Common myeloid progenitor, CD34-positive (primary cell): ENCODE measurements at regions of chr7 and their contacts with region 1.

Region 1: GRCh38 chr7:51141451-51142003 is 175.1 kb downstream of the COBL start:
- DNase-seq: peak; percentile 57 to 78 (median 74)
- H3K4me3 ChIP-seq: no peak overlapping the region
- H3K27ac ChIP-seq: no peak overlapping the region
- H3K4me1 ChIP-seq: peaks cover 15 to 44% (median 25%) of the 10 kb centered on the region in 4 experiments
- H3K27me3 ChIP-seq: peaks cover 0 to 2% (median 0%) of the 10 kb centered on the region in 5 experiments

Region 2: GRCh38 chr7:50092579-50093491 is 1048.7 kb before region 1 on chr7 and contains the start of gene ZPBP:
- CTCF ChIA-PET with region 1: interaction called, 10 read pairs
- POLR2A ChIA-PET with region 1: no interaction called
- DNase-seq: peak; percentile 68 to 84 (median 78)
- H3K4me3 ChIP-seq: peak within 1 kb of the TSS; percentile 11 to 86 (median 76)
- H3K27ac ChIP-seq: peak within 1 kb of the TSS in 1 of 2 experiments; percentile 22
- H3K4me1 ChIP-seq: peaks cover 3 to 9% (median 6%) of the 10 kb centered on the region in 4 experiments
- H3K27me3 ChIP-seq: no peaks in the 10 kb centered on the region

Region 3: DNA sequence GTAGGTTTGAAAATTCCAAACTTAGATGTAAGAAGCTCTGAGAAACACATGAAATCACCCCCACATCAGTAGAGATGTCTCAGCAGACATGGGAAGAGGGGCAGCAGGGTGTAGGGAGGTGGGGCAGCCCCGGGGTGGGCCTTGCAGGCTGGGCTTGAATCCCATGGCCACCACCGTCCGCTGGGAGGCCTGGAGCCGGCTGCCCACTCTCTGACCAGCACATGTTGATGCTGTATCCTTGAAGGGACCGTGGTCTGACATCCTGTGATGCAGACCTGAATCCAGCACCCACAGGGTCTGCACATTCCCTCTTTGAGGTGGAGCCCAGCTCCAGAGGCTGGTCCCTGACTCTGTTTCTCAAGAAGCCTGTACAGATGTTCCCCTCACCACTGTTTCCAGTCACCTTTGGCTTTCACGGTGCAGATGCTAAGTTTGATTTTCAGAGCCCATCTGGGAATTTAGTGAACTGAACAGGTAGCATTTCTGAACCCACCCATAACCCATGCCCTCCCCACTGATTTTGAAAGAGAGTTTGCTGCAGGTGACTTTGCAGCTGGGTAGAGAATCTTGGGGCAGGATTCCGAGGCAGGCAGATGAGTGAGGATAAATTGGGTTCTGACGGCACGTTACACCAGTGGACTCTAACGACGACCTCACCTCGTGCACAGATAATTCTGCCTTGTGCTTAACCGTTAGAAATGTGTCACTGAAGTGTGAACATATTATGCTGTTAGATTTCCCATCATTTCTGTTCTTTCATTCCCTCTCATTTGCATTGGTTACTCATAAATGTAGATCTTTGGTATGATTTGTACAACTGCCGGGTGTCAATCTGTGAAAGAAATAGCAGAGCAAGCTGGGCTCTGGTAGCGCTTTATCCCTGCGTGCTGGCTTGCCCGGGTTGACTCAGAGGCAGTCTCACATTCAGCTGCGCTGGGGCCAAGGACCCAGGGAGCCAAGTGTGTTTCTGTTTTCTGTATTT is 791.3 kb before region 1 on chr7:
- CTCF ChIA-PET with region 1: no interaction called
- POLR2A ChIA-PET with region 1: no interaction called
- DNase-seq: peak in 2 of 3 donors; percentile 70 to 75
- H3K4me3 ChIP-seq: no peak overlapping the region
- H3K27ac ChIP-seq: peak overlapping the region; percentile 16 to 75
- H3K4me1 ChIP-seq: peaks cover 15 to 74% (median 62%) of the 10 kb centered on the region in 4 experiments
- H3K27me3 ChIP-seq: no peaks in the 10 kb centered on the region

Region 4: GRCh38 chr7:50664461-50664922 is 477.0 kb before region 1 on chr7:
- CTCF ChIA-PET with region 1: interaction called, 17 read pairs
- POLR2A ChIA-PET with region 1: no interaction called
- DNase-seq: peak; percentile 53 to 95 (median 90)
- H3K4me3 ChIP-seq: peak overlapping the region in 2 of 7 experiments; percentile 26 to 32
- H3K27ac ChIP-seq: peak overlapping the region in 1 of 2 experiments; percentile 68
- H3K4me1 ChIP-seq: peaks cover 12 to 70% (median 66%) of the 10 kb centered on the region in 4 experiments
- H3K27me3 ChIP-seq: no peaks in the 10 kb centered on the region

Region 5: GRCh38 chr7:50679218-50680007 is 462.1 kb before region 1 on chr7:
- CTCF ChIA-PET with region 1: interaction called, 59 read pairs
- POLR2A ChIA-PET with region 1: no interaction called
- DNase-seq: peak; percentile 54 to 73 (median 70)
- H3K4me3 ChIP-seq: no peak overlapping the region
- H3K27ac ChIP-seq: no peak overlapping the region
- H3K4me1 ChIP-seq: peaks cover 2 to 22% (median 18%) of the 10 kb centered on the region in 4 experiments
- H3K27me3 ChIP-seq: no peaks in the 10 kb centered on the region

Region 6: DNA sequence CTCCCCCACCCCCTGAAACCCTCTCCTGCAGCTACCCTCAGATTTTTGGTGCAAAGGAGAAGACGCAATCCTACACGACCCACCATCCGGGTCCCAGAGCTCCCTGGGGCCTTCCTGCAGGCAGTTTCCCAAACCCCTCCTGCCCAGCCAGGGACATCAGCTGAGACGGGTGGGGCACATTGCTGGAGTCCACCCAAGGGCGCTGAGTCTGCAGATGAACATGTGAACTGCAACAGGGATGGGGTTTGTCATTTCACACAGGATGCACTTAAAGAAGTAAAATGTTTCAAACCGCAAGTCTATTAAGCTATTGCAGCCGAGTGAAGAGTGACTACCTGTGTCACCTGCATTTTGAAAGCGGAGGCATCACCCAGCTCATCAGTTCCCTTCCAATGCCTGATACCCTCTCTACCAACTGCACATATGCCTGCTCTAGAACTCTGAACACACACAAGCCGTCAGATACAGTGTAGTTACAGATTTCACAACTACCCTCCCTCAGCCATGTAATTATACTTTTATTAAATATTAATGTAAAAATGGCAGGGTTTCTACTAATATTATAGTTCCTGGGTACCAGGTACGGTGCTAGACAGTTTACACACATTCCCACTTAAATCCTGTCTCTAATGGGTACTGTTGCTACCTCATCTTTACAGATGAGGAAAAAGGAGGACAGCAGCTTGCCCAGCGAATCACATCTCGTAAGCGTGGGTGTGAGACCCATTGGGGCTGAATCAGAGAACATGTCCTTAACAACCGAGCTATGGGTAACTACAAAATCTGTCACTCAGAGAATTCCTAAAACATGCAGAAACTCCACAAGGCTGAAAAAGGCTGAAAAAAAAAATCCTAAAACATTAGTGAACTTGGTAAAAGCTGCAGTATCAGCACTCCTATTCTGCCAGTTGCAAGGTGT is 430.0 kb before region 1 on chr7:
- CTCF ChIA-PET with region 1: interaction called, 10 read pairs
- POLR2A ChIA-PET with region 1: no interaction called
- DNase-seq: peak in 2 of 3 donors; percentile 22 to 40
- H3K4me3 ChIP-seq: no peak overlapping the region
- H3K27ac ChIP-seq: no peak overlapping the region
- H3K4me1 ChIP-seq: peaks cover 2 to 29% (median 10%) of the 10 kb centered on the region in 4 experiments
- H3K27me3 ChIP-seq: no peaks in the 10 kb centered on the region

Region 7: DNA sequence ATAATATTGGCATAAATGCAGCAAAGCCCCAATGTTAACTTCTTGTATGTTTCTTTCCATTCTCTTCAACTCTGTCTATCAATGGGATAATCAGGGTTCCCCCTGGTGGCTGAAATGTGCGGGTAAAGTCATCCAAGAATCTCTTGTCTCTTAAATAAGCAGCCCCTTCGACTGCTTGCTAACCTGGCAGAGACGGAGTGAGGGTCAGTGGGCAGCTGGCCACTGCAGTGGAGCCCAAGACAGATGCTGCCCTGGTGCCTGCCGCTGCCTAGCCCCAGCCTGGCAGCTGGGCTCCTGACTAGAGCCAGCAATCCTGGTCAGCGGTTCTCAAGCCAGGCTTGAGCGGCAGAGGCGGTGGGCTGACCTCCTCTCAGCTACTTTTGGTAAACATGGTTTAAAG is 73.8 kb before region 1 on chr7:
- CTCF ChIA-PET with region 1: interaction called, 15 read pairs
- POLR2A ChIA-PET with region 1: no interaction called
- DNase-seq: peak; percentile 71 to 86 (median 78)
- H3K4me3 ChIP-seq: no peak overlapping the region
- H3K27ac ChIP-seq: no peak overlapping the region
- H3K4me1 ChIP-seq: peaks cover 0 to 33% (median 11%) of the 10 kb centered on the region in 4 experiments
- H3K27me3 ChIP-seq: no peaks in the 10 kb centered on the region

Region 8: GRCh38 chr7:51111241-51111940 is 30.1 kb before region 1 on chr7:
- CTCF ChIA-PET with region 1: no interaction called
- POLR2A ChIA-PET with region 1: no interaction called
- DNase-seq: no peak
- H3K4me3 ChIP-seq: no peak overlapping the region
- H3K27ac ChIP-seq: no peak overlapping the region
- H3K4me1 ChIP-seq: no peaks in the 10 kb centered on the region
- H3K27me3 ChIP-seq: no peaks in the 10 kb centered on the region

Region 9: GRCh38 chr7:51308265-51308664 is 166.7 kb after region 1 on chr7:
- CTCF ChIA-PET with region 1: no interaction called
- POLR2A ChIA-PET with region 1: no interaction called
- DNase-seq: no peak
- H3K4me3 ChIP-seq: no peak overlapping the region
- H3K27ac ChIP-seq: no peak overlapping the region
- H3K4me1 ChIP-seq: no peaks in the 10 kb centered on the region
- H3K27me3 ChIP-seq: peaks cover 0 to 5% (median 3%) of the 10 kb centered on the region in 5 experiments